Posterior vena cava (tissue), 2 donors: ENCODE measurements at regions of chr9 and their contacts with region 1.

Region 1: GRCh38 chr9:125374443-125375309 is 113.0 kb downstream of the GAPVD1 start:
- DNase-seq: peak; percentile 88

Region 2: GRCh38 chr9:124743686-124744348 is 630.9 kb before region 1 on chr9:
- intact Hi-C with region 1: no loop called
- DNase-seq: no peak

Region 3: GRCh38 chr9:124771021-124771866 is 603.4 kb before region 1 on chr9 and contains the start of gene NR6A1:
- intact Hi-C with region 1: loop called in 1 of 2 experiments (anchors 10 kb)
- DNase-seq: peak; percentile 99
- total RNA-seq, gene NR6A1: 0.23 to 0.76 TPM

Region 4: GRCh38 chr9:124975131-124975530 is 399.5 kb before region 1 on chr9:
- intact Hi-C with region 1: no loop called
- DNase-seq: no peak

Region 5: GRCh38 chr9:125317704-125318103 is 57.0 kb before region 1 on chr9:
- intact Hi-C with region 1: no loop called
- DNase-seq: no peak

Region 6: GRCh38 chr9:125397736-125398135 is 23.1 kb after region 1 on chr9:
- intact Hi-C with region 1: no loop called
- DNase-seq: no peak